K562 (cell line): ENCODE measurements at regions of chr1 and their contacts with region 1.

Region 1: GRCh38 chr1:160376525-160377131 is 9.8 kb downstream of the NHLH1 start:
- DNase-seq: peak; percentile 72 to 82 (median 74)
- ATAC-seq: peak; percentile 85
- H3K4me3 ChIP-seq: no peak overlapping the region
- H3K27ac ChIP-seq: no peak overlapping the region
- H3K4me1 ChIP-seq: peaks cover 17 to 22% of the 10 kb centered on the region in 2 experiments
- H3K27me3 ChIP-seq: no peaks in the 10 kb centered on the region; a peak in 1 of 5 replicates
- CTCF ChIP-seq: peak; percentile 89 to 98 (median 94)
- EP300 ChIP-seq: no peak
- POLR2A ChIP-seq: no peak
- RAD21 ChIP-seq: peak; percentile 97 to 99

Region 2: DNA sequence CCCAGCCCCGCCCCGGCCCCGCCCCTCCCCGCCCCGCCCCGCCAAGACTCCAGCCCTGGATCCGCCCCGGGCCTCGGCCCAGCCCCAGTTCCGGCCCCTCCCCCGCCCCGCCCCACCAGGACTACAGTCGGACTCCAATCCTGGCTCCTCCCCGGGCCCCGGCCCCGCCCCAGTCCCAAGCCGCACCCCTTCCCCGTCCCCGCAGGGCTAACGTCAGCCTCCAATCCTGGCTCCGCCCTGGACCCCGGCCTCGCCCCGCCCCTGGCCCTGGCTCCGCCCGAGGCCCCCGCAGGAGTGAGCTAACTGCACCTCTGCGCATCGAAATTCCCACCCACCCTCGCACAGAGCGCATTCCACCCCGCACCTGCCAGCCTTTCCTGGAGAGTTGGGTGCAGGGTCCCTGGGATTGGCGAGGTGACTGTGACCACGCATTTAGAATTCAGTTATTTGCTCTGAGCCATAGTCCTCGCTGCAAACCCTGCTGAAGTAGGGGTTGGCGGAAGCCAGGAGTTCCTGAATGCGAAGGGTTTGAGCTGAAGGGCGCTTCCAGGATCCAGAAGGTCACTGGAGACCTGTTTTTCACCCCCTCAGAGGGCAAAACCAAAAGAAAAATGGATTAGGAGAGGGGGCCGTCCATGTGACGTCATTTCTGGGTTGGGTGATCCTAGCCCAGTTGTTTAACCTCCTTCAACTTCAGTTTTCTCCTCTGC is 277.6 kb before region 1 on chr1:
- CTCF ChIA-PET with region 1: interaction called, 4 read pairs
- POLR2A ChIA-PET with region 1: interaction called, 4 read pairs
- in situ Hi-C with region 1: loop called (anchors 10 kb)
- intact Hi-C with region 1: loop called (anchors 1 kb)
- DNase-seq: peak; percentile 95 to 99 (median 98)
- ATAC-seq: peak; percentile 96
- H3K4me3 ChIP-seq: peak overlapping the region; percentile 45
- H3K27ac ChIP-seq: peak overlapping the region; percentile 71
- H3K4me1 ChIP-seq: peaks cover 18 to 35% of the 10 kb centered on the region in 2 experiments; a peak in 4 of 5 replicates
- H3K27me3 ChIP-seq: no peaks in the 10 kb centered on the region
- CTCF ChIP-seq: no peak
- EP300 ChIP-seq: no peak
- POLR2A ChIP-seq: no peak
- RAD21 ChIP-seq: no peak

Region 3: DNA sequence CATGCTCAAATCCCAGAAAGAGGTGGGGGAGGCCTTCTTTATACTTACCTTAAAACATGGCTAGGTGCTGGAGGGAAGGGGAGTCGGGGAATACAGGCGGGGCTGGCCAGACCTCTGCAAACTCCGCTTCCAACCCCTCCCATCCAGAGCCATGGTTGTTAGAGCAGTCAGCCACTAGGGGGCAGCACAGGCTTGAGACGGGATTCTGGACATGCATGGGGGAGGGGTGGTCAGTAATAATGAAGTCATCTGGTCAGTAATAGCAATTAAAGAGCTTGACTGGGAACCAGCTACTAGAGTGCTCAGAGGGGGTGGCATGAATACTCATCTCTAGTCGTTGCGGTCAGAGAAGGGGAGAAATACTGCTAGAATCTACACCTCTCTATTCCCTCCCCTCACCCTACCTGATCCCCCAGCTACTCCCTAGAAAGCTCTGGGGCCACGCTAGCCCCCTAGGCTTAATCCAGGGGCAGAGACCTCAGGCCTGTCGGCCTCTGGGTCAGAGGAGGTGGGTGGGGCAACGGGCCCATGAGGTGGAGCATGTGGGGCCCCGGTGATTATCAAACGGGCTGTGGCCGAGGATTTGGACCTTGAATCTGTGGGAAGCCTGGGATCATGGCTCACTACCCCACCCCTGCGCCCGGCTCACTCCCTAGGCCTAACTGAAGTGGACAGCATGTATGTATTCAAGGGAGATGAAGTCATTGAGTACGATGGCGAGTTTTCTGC is 183.4 kb before region 1 on chr1:
- CTCF ChIA-PET with region 1: interaction called, 11 read pairs
- POLR2A ChIA-PET with region 1: interaction called, 4 read pairs
- in situ Hi-C with region 1: no loop called
- intact Hi-C with region 1: loop called (anchors 1 kb)
- DNase-seq: peak; percentile 81 to 90 (median 84)
- ATAC-seq: peak; percentile 92
- H3K4me3 ChIP-seq: no peak overlapping the region
- H3K27ac ChIP-seq: peak overlapping the region; percentile 22; the same call in 2 of the 3 replicates
- H3K4me1 ChIP-seq: peaks cover 4 to 10% of the 10 kb centered on the region in 2 experiments
- H3K27me3 ChIP-seq: peaks cover 16 to 38% of the 10 kb centered on the region in 2 experiments; a peak in 4 of 5 replicates
- CTCF ChIP-seq: peak; percentile 93 to 96 (median 95)
- EP300 ChIP-seq: no peak
- POLR2A ChIP-seq: no peak
- RAD21 ChIP-seq: peak; percentile 92 to 95

Region 4: GRCh38 chr1:160271025-160271424 is 105.6 kb before region 1 on chr1:
- CTCF ChIA-PET with region 1: no interaction called
- POLR2A ChIA-PET with region 1: no interaction called
- in situ Hi-C with region 1: no loop called
- intact Hi-C with region 1: no loop called
- DNase-seq: no peak
- ATAC-seq: no peak
- H3K4me3 ChIP-seq: no peak overlapping the region
- H3K27ac ChIP-seq: no peak overlapping the region
- H3K4me1 ChIP-seq: 0 out of 5 replicates have a peak, but pooled peaks cover 0 to 6% of the 10 kb centered on the region in 2 experiments
- H3K27me3 ChIP-seq: no peaks in the 10 kb centered on the region
- CTCF ChIP-seq: no peak
- EP300 ChIP-seq: no peak
- POLR2A ChIP-seq: no peak
- RAD21 ChIP-seq: no peak

Region 5: DNA sequence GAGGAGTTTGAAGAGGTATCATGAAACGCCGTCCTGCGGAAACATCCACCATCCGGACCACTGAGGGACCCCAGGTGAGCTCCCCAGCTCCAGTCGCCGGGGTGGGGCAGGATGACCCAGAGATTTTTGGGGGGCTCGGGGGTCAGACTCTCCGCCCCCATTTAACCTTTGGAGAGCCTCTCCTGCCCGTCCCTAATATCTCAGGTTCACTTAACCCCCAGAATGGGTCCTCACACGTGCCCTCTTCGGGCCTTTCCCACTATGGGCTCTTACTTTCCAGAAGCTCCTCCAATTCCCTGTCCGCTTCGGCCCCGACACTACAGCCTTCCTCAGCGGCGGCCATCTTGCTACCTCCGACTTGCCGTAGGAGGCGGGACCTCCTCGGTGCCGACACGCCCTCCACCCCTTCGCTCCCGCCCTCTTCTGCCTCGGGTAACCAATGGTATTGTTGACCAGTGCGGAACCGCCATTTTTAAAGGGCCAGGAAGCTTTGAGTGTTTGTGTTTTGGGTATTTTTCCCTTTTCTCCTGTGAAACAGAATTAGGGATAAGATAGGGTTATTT is 91.8 kb before region 1 on chr1 and contains the start of gene PEX19:
- CTCF ChIA-PET with region 1: no interaction called
- POLR2A ChIA-PET with region 1: interaction called, 3 read pairs
- in situ Hi-C with region 1: no loop called
- intact Hi-C with region 1: loop called (anchors 5 kb)
- DNase-seq: peak; percentile 95 to 98 (median 96)
- ATAC-seq: peak; percentile 99
- H3K4me3 ChIP-seq: peak within 1 kb of the TSS; percentile 74
- H3K27ac ChIP-seq: peak within 1 kb of the TSS; percentile 72
- H3K4me1 ChIP-seq: peaks cover 5 to 14% of the 10 kb centered on the region in 2 experiments; a peak in 4 of 5 replicates
- H3K27me3 ChIP-seq: no peaks in the 10 kb centered on the region
- CTCF ChIP-seq: no peak
- EP300 ChIP-seq: peak; percentile 17; the same call in 1 of the 2 replicates
- POLR2A ChIP-seq: peak; percentile 93
- RAD21 ChIP-seq: no peak
- polyA plus RNA-seq, gene PEX19: 81.2 to 103 TPM

Region 6: DNA sequence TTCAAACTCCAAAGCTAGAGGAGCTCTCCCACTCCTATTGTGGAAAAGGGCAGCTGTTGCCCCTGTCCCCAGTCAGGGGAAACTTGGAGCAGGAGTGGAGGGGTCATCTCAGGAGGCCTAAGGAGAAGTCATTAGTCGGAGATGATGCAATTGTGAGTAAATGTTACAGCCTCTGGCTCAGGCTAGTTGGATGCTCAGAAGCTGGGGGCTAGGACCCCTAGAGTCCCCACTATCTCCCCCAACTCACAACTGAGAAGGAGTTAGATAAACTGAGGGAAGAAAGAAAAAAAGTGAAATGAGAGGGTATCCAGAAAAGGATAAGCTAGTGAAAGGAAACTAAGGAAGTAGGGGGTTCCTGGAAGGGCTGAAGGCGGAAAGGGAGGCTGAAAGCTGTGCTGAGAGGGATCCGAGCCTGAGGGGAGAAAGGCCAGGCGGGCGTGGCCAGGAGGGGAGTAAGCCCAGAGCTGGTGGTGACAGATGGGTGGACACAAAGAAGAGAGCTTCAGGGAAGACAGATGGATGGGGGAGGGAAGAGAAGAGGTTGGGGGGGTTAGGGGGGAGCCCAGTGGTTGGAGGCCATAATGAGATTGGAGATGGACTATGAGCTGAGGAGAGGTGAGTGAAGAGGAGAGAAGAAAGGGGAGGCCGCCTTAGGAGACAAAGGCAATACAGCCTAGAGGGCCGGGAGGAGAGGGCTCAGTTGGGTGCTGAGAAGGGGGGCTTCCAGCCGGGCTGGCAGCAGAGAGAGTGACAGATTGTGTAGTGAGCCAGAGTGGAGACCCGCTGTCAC is 14.3 kb before region 1 on chr1:
- CTCF ChIA-PET with region 1: no interaction called
- POLR2A ChIA-PET with region 1: interaction called, 21 read pairs
- in situ Hi-C with region 1: no loop called
- intact Hi-C with region 1: loop called (anchors 2 kb)
- DNase-seq: peak; percentile 75 to 78 (median 78)
- ATAC-seq: peak; percentile 85
- H3K4me3 ChIP-seq: no peak overlapping the region
- H3K27ac ChIP-seq: peak overlapping the region; percentile 73
- H3K4me1 ChIP-seq: peaks cover 18 to 34% of the 10 kb centered on the region in 2 experiments
- H3K27me3 ChIP-seq: no peaks in the 10 kb centered on the region
- CTCF ChIP-seq: no peak
- EP300 ChIP-seq: peak; percentile 64
- POLR2A ChIP-seq: no peak
- RAD21 ChIP-seq: 0 out of 4 replicates have a peak, but pooled peaks of 1 of the 2 experiments have one; percentile 23

Region 7: GRCh38 chr1:160580221-160580812 is 203.7 kb after region 1 on chr1:
- CTCF ChIA-PET with region 1: no interaction called
- POLR2A ChIA-PET with region 1: no interaction called
- in situ Hi-C with region 1: no loop called
- intact Hi-C with region 1: no loop called
- DNase-seq: no peak
- ATAC-seq: peak; percentile 13; the same call in 1 of the 3 replicates
- H3K4me3 ChIP-seq: no peak overlapping the region
- H3K27ac ChIP-seq: no peak overlapping the region
- H3K4me1 ChIP-seq: peaks cover 3 to 64% of the 10 kb centered on the region in 2 experiments; a peak in 4 of 5 replicates
- H3K27me3 ChIP-seq: no peaks in the 10 kb centered on the region
- CTCF ChIP-seq: no peak
- EP300 ChIP-seq: no peak
- POLR2A ChIP-seq: no peak
- RAD21 ChIP-seq: no peak